CD4-positive, alpha-beta T cell (primary cell): ENCODE measurements at regions of chr6 and their contacts with region 1.

Region 1: GRCh38 chr6:139375232-139376016 is 976 bp upstream of the CITED2 start:
- DNase-seq: peak; percentile 72 to 92 (median 80)
- ATAC-seq: peak; percentile 65
- H3K4me3 ChIP-seq: peak overlapping the region; percentile 71
- H3K4me3 Mint-ChIP-seq: peak overlapping the region; percentile 95
- H3K27ac ChIP-seq: peak overlapping the region; percentile 69 to 92
- H3K27ac Mint-ChIP-seq: peak overlapping the region; percentile 97
- H3K4me1 ChIP-seq: peaks cover 16% of the 10 kb centered on the region
- H3K4me1 Mint-ChIP-seq: peaks cover 28% of the 10 kb centered on the region
- H3K27me3 ChIP-seq: no peaks in the 10 kb centered on the region
- H3K27me3 Mint-ChIP-seq: no peaks in the 10 kb centered on the region
- CTCF ChIP-seq: no peak

Region 2: DNA sequence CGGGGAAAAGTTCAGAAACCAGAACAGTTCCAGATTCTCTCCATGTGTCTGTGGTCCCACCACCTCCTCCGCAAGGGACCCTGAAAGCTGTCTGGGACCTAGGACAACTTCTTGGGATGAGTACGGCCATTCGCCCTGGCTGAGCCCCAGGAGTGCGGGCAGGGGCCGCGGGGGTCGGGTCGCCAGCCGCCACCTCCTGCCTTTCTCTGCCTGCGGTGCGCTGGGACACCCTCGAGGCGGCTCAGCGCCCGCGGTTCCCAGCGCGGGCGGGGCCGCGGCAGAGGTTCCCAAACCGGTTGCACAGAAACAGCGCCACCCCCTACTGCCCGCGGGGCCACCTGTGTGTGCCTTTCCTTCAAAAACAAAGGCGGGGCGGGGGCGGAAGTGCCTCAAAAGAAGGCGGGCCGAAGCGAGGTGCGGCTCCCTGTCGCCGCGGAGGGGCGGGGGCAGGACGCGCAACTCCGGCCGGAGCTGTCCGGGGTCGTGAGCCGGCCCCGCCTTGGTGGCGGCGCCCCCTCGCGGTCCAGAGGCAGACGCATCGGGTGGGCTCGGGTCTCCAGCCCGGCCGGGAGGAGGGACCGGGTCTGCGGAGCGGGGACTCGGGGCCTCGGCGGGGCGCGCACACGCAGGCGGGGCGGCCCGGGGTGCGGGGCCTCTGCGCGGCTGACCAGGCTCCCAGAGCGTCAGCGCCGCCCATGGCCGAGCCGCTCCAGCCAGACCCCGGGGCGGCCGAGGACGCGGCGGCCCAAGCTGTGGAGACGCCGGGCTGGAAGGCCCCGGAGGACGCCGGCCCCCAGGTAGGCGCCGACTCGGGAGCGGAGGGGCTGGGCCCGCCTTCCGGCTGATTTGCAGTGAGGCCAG is 971.4 kb before region 1 on chr6 and contains the start of gene HEBP2:
- CTCF ChIA-PET with region 1: no interaction called
- POLR2A ChIA-PET with region 1: interaction called, 14 read pairs
- intact Hi-C with region 1: loop called in 1 of 2 experiments (anchors 10 kb)
- DNase-seq: peak; percentile 77 to 97 (median 94)
- ATAC-seq: peak; percentile 93
- H3K4me3 ChIP-seq: peak within 1 kb of the TSS; percentile 91
- H3K4me3 Mint-ChIP-seq: peak within 1 kb of the TSS; percentile 87
- H3K27ac ChIP-seq: peak within 1 kb of the TSS; percentile 61 to 75
- H3K27ac Mint-ChIP-seq: peak within 1 kb of the TSS; percentile 86
- H3K4me1 ChIP-seq: peaks cover 27% of the 10 kb centered on the region
- H3K4me1 Mint-ChIP-seq: peaks cover 21% of the 10 kb centered on the region
- H3K27me3 ChIP-seq: no peaks in the 10 kb centered on the region
- H3K27me3 Mint-ChIP-seq: no peaks in the 10 kb centered on the region
- CTCF ChIP-seq: peak; percentile 48
- total RNA-seq, gene HEBP2: 31.8 to 32.9 TPM

Region 3: GRCh38 chr6:139028658-139029469 is 346.6 kb before region 1 on chr6 and contains the start of gene ABRACL:
- CTCF ChIA-PET with region 1: interaction called, 3 read pairs
- POLR2A ChIA-PET with region 1: interaction called, 46 read pairs
- intact Hi-C with region 1: loop called (anchors 2 to 5 kb)
- DNase-seq: peak; percentile 48 to 88 (median 69)
- ATAC-seq: peak; percentile 89
- H3K4me3 ChIP-seq: peak within 1 kb of the TSS; percentile 85
- H3K4me3 Mint-ChIP-seq: peak within 1 kb of the TSS; percentile 97
- H3K27ac ChIP-seq: peak within 1 kb of the TSS; percentile 84 to 90
- H3K27ac Mint-ChIP-seq: peak within 1 kb of the TSS; percentile 96
- H3K4me1 ChIP-seq: peaks cover 20% of the 10 kb centered on the region
- H3K4me1 Mint-ChIP-seq: peaks cover 35% of the 10 kb centered on the region
- H3K27me3 ChIP-seq: no peaks in the 10 kb centered on the region
- H3K27me3 Mint-ChIP-seq: no peaks in the 10 kb centered on the region
- CTCF ChIP-seq: no peak
- total RNA-seq, gene ABRACL: 36.8 to 40.6 TPM

Region 4: GRCh38 chr6:139134817-139135581 is 240.4 kb before region 1 on chr6 and contains the start of gene HECA:
- CTCF ChIA-PET with region 1: interaction called, 3 read pairs
- POLR2A ChIA-PET with region 1: interaction called, 57 read pairs
- intact Hi-C with region 1: no loop called
- DNase-seq: peak; percentile 97 to 100 (median 99)
- ATAC-seq: peak; percentile 78
- H3K4me3 ChIP-seq: peak within 1 kb of the TSS; percentile 72
- H3K4me3 Mint-ChIP-seq: peak within 1 kb of the TSS; percentile 90
- H3K27ac ChIP-seq: peak within 1 kb of the TSS; percentile 94 to 95
- H3K27ac Mint-ChIP-seq: peak within 1 kb of the TSS; percentile 97
- H3K4me1 ChIP-seq: peaks cover 46% of the 10 kb centered on the region
- H3K4me1 Mint-ChIP-seq: peaks cover 77% of the 10 kb centered on the region
- H3K27me3 ChIP-seq: no peaks in the 10 kb centered on the region
- H3K27me3 Mint-ChIP-seq: no peaks in the 10 kb centered on the region
- CTCF ChIP-seq: no peak
- total RNA-seq, gene HECA: 203 to 207 TPM

Region 5: GRCh38 chr6:139219271-139219729 is 156.1 kb before region 1 on chr6:
- CTCF ChIA-PET with region 1: interaction called, 32 read pairs
- POLR2A ChIA-PET with region 1: interaction called, 37 read pairs
- intact Hi-C with region 1: no loop called
- DNase-seq: peak; percentile 47 to 87 (median 68)
- ATAC-seq: peak; percentile 98
- H3K4me3 ChIP-seq: no peak overlapping the region
- H3K4me3 Mint-ChIP-seq: no peak overlapping the region
- H3K27ac ChIP-seq: no peak overlapping the region
- H3K27ac Mint-ChIP-seq: peak overlapping the region; percentile 1
- H3K4me1 ChIP-seq: peaks cover 8% of the 10 kb centered on the region
- H3K4me1 Mint-ChIP-seq: peaks cover 16% of the 10 kb centered on the region
- H3K27me3 ChIP-seq: no peaks in the 10 kb centered on the region
- H3K27me3 Mint-ChIP-seq: no peaks in the 10 kb centered on the region
- CTCF ChIP-seq: peak; percentile 85

Region 6: DNA sequence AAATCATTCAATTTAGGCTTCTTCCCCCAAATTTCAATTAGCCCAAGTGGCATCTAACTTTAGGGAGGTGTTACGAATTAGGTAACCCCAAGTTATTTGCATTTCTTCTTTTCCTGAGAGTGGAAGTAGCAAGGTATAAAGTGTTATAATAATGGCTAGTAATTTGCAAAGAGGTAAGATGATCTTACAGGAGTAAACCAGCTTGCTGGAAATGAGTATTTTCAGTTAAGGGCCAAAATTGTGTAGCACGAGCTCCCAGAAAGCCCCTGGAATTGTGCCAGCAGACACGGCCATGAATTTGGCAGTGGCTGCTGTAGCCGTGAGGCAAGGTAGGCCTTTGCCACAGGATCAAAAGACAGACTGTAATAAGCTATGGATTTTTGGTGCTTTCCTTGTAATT is 38.9 kb before region 1 on chr6:
- CTCF ChIA-PET with region 1: no interaction called
- POLR2A ChIA-PET with region 1: no interaction called
- intact Hi-C with region 1: no loop called
- DNase-seq: peak in 3 of 14 experiments; percentile 8 to 52 (median 45)
- ATAC-seq: no peak
- H3K4me3 ChIP-seq: no peak overlapping the region
- H3K4me3 Mint-ChIP-seq: no peak overlapping the region
- H3K27ac ChIP-seq: no peak overlapping the region
- H3K27ac Mint-ChIP-seq: no peak overlapping the region
- H3K4me1 ChIP-seq: peaks cover 3% of the 10 kb centered on the region
- H3K4me1 Mint-ChIP-seq: no peaks in the 10 kb centered on the region
- H3K27me3 ChIP-seq: no peaks in the 10 kb centered on the region
- H3K27me3 Mint-ChIP-seq: no peaks in the 10 kb centered on the region
- CTCF ChIP-seq: no peak

Region 7: DNA sequence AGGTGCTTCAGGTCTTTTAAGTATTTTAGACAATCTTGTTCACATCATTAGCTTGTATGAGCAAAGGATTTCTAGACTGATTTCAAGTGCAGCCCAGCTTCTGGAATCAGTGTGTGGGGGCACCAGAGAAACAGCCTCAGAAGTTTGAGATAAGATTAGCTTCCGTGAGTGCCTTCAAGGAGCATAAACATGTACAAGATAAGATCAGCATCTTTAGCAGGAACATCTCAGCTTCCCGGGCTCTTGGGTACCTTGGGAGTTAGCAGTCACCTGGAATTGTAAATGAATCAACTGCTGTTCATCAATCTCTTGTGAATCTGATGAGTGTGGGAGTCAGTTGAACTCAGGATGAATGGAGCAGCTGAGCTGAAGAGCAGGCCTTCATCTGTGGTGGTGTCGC is 11.0 kb after region 1 on chr6:
- CTCF ChIA-PET with region 1: no interaction called
- POLR2A ChIA-PET with region 1: interaction called, 12 read pairs
- intact Hi-C with region 1: no loop called
- DNase-seq: no peak
- ATAC-seq: no peak
- H3K4me3 ChIP-seq: no peak overlapping the region
- H3K4me3 Mint-ChIP-seq: no peak overlapping the region
- H3K27ac ChIP-seq: no peak overlapping the region
- H3K27ac Mint-ChIP-seq: no peak overlapping the region
- H3K4me1 ChIP-seq: no peaks in the 10 kb centered on the region
- H3K4me1 Mint-ChIP-seq: no peaks in the 10 kb centered on the region
- H3K27me3 ChIP-seq: no peaks in the 10 kb centered on the region
- H3K27me3 Mint-ChIP-seq: no peaks in the 10 kb centered on the region
- CTCF ChIP-seq: no peak

Region 8: DNA sequence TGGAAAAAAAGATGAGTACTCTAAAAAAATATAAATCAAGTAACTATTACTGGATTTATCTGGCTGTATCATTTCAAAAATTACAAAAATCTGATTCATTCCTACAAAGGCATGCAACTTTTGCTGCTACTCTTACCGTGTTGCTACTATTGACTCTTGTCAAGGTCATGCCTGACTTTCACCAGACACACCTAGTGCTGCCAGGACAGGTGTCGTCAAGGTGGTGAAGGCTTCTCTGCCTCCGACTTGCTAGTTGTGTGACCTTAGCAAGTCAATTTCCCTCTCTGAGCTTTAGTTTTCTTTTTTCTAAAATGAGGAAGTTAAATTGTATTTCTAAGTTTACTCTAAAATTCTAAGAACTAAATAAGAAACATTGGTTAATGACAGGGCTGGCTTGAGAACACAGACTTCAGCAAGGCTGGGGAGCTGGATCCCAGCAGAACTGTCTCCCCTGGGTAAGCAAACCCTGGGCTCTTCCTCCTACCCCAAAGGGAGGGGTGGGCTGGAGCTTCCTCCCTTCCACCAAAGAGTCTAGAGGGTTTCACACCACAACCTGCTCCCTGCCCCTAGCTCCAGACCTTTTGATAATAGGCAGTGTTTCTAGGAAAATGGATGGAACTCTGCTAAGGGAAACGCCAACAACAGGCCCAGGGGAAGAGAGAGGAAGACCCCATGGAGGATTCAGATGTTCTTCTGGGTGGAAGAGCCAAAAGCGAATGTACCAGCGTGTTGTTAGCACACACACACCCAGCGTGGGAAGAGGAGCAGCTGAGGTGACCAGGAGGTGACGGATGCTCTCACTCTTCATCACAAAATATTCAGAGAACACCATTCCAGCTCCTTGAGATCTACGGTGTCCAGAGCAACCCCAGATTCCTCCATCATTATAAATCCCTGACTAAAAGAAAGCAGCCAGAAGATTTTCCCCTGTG is 46.9 kb after region 1 on chr6:
- CTCF ChIA-PET with region 1: no interaction called
- POLR2A ChIA-PET with region 1: no interaction called
- intact Hi-C with region 1: no loop called
- DNase-seq: no peak
- ATAC-seq: no peak
- H3K4me3 ChIP-seq: no peak overlapping the region
- H3K4me3 Mint-ChIP-seq: no peak overlapping the region
- H3K27ac ChIP-seq: no peak overlapping the region
- H3K27ac Mint-ChIP-seq: no peak overlapping the region
- H3K4me1 ChIP-seq: no peaks in the 10 kb centered on the region
- H3K4me1 Mint-ChIP-seq: no peaks in the 10 kb centered on the region
- H3K27me3 ChIP-seq: no peaks in the 10 kb centered on the region
- H3K27me3 Mint-ChIP-seq: peaks cover 8% of the 10 kb centered on the region
- CTCF ChIP-seq: no peak

Region 9: GRCh38 chr6:139540276-139540675 is 164.9 kb after region 1 on chr6:
- CTCF ChIA-PET with region 1: no interaction called
- POLR2A ChIA-PET with region 1: interaction called, 25 read pairs
- intact Hi-C with region 1: no loop called
- DNase-seq: peak; percentile 13 to 78 (median 36)
- ATAC-seq: peak; percentile 94
- H3K4me3 ChIP-seq: no peak overlapping the region
- H3K4me3 Mint-ChIP-seq: peak overlapping the region; percentile 0
- H3K27ac ChIP-seq: peak overlapping the region in 1 of 2 donors; percentile 50
- H3K27ac Mint-ChIP-seq: peak overlapping the region; percentile 65
- H3K4me1 ChIP-seq: peaks cover 26% of the 10 kb centered on the region
- H3K4me1 Mint-ChIP-seq: peaks cover 36% of the 10 kb centered on the region
- H3K27me3 ChIP-seq: no peaks in the 10 kb centered on the region
- H3K27me3 Mint-ChIP-seq: no peaks in the 10 kb centered on the region
- CTCF ChIP-seq: no peak